Heart right ventricle (tissue), 16 donors: ENCODE measurements at regions of chr3 and their contacts with region 1.

Region 1: DNA sequence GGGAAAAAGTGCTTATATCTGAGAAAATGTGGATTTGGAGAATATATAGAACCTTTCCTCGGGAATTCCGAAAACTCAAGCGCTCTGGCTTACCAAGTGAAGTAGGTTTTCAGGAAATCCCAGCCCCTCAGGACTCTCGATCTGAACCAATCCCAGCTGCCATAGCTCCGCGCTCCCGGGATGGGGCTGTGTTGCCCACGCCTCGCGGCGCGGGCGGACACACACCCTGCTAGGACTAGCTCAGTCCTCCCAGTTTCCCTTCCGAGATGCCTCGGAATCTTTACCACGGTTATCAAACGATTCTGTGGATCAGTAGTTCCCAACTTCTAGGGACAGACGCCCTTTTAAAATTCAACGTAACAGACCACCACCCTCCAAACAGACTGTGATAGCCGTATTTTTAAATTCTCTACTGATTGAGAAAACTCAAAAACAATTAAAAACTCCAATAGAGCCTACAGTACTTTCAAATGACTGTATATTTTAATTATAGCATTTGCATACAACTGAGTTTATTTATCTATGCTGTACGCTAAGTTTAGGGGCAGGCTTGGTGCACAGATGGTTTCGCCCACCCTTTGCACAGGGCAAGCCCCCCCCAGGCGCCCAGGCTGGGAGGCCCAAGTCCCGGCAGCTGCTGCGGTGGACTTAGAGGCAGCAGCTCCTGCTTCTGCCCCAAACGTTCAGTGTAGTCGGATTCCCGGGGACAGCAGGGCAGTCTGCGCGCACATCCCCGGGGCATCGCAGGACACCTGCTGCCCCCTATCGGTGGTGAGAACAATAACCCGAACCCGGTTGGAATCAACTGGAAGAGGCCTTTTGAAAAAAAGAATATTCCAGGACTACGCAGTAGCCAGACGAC is 52.3 kb downstream of the CCDC54 start:
- DNase-seq: peak; percentile 67 to 77
- ATAC-seq: peak; percentile 72 to 92 (median 88)
- H3K4me3 ChIP-seq: peak overlapping the region; percentile 23 to 95 (median 85)
- H3K27ac ChIP-seq: peak overlapping the region; percentile 3 to 99 (median 96)
- H3K4me1 ChIP-seq: peaks cover 0 to 28% (median 16%) of the 10 kb centered on the region in 9 donors
- H3K27me3 ChIP-seq: peaks cover 0 to 15% (median 0%) of the 10 kb centered on the region in 7 donors
- CTCF ChIP-seq: peak; percentile 79 to 94 (median 91)

Region 2: GRCh38 chr3:107367353-107367752 is 62.2 kb before region 1 on chr3:
- intact Hi-C with region 1: no loop called
- DNase-seq: no peak
- ATAC-seq: no peak
- H3K4me3 ChIP-seq: no peak overlapping the region
- H3K27ac ChIP-seq: no peak overlapping the region
- H3K4me1 ChIP-seq: peaks cover 0 to 10% (median 0%) of the 10 kb centered on the region in 9 donors
- H3K27me3 ChIP-seq: no peaks in the 10 kb centered on the region
- CTCF ChIP-seq: no peak

Region 3: DNA sequence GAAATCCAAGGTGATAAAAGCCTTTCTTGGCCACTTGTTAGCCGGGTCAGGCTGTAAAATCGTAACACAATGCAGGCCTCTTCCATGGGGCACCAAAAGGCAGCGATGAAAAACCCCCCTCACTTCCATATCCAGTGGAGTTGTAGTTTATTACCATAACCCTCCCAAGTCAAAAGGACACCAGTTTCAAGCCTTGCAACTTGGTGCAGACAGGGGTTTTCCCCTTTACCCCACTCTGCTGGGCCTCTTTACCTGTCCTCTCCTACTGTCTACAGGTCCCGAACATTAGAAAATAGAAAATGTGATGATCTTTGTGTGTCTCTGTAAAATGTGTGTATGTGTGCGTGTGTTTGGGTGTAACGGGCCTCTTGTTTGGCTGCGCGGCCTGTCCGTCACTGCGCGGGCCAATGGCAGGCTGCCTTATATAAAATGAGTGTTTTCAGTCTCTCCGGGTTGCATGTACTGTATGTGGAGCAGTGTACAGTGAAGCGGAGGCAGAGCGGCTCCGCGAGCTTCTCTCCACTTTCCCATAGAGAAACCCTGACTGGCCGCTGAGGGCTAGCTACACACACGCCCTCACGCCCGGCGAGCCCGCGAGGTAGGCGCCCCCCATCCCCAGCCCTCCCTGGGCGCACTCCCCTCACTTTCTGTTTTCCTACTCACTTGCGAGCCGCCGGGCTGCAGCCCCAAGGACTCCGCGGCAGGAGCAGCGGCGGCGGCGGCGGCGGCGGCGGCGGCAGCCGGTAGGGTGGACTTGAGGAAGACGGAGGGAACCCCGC is 93.1 kb after region 1 on chr3 and contains the start of gene BBX:
- intact Hi-C with region 1: loop called in 8 of 10 experiments (anchors 2 to 5 kb)
- DNase-seq: peak; percentile 90 to 95
- ATAC-seq: peak; percentile 96 to 98 (median 98)
- H3K4me3 ChIP-seq: peak within 1 kb of the TSS; percentile 70 to 94 (median 91)
- H3K27ac ChIP-seq: peak within 1 kb of the TSS; percentile 63 to 96 (median 94)
- H3K4me1 ChIP-seq: peaks cover 0 to 20% (median 14%) of the 10 kb centered on the region in 9 donors
- H3K27me3 ChIP-seq: no peaks in the 10 kb centered on the region
- CTCF ChIP-seq: no peak
- total RNA-seq, gene BBX: 21.3 to 49.8 (median 39.7) TPM

Region 4: DNA sequence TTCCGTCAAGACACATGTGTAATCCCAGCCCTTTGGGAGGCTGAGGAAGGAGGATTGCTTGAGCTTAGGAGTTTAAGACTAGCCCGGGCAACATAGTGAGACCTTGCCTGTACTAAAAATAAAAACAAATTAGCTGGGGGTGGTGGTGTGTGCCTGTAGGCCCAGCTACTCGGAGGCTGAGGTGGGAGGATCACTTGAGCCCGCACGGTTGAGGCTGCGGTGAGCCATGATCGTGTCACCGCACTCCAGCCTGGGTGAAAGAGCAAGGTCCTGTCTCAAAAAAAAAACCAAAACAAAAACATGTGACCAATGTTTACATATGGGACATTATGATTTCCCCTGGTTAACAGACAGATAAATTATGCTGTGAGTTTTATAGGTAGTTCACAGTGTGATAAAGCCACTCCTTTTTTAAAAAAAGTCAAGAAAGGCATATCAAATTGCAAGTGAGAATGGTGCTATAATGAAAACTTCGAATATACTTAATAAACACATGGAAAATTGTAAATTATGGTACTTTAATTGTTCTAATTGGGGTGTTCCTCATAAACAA is 102.4 kb after region 1 on chr3:
- intact Hi-C with region 1: loop called in 2 of 10 experiments (anchors 5 to 10 kb)
- DNase-seq: no peak
- ATAC-seq: no peak
- H3K4me3 ChIP-seq: no peak overlapping the region
- H3K27ac ChIP-seq: no peak overlapping the region
- H3K4me1 ChIP-seq: peaks cover 0 to 6% (median 0%) of the 10 kb centered on the region in 9 donors
- H3K27me3 ChIP-seq: no peaks in the 10 kb centered on the region
- CTCF ChIP-seq: no peak

Region 5: GRCh38 chr3:107612664-107613084 is 183.1 kb after region 1 on chr3:
- intact Hi-C with region 1: loop called in 1 of 10 experiments (anchors 5 kb)
- DNase-seq: no peak
- ATAC-seq: no peak
- H3K4me3 ChIP-seq: no peak overlapping the region
- H3K27ac ChIP-seq: no peak overlapping the region
- H3K4me1 ChIP-seq: no peaks in the 10 kb centered on the region
- H3K27me3 ChIP-seq: no peaks in the 10 kb centered on the region
- CTCF ChIP-seq: no peak